ENCODE measurements at regions of chr16 and their contacts with region 1.

Region 1: DNA sequence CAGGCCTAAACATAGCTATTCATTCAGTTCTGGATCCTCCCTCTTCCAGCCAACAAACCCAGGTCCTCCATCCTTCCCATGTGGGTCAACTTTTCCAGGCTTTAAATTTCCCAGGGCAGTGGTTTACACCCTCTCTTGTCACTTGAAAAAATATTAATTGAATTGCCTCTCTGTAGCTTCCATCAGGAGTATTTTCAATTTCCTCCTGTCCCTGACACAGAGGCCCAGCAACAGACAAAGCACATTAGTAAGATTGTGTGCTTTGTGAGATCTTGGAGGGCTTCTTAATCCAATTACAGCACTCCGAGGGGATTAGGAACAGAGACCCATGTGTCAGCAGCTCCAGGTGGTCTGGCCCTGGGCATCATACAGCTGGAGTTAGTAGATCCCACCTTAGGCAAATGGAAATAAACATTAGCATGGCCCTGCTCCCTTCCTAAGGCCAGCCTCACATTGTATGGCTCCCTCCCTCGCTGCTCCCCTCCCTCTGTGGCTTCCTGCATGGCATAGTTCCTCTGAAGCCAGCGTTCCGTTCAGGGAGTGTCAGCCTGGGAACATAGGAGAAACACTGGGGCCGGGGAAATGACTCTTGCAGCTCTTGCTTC is 132.7 kb upstream of the HSBP1 start:
- DNase-seq: no peak
- H3K4me3 ChIP-seq: no peak overlapping the region
- H3K27ac ChIP-seq: no peak overlapping the region
- H3K4me1 ChIP-seq: no peaks in the 10 kb centered on the region
- H3K27me3 ChIP-seq: no peaks in the 10 kb centered on the region
- CTCF ChIP-seq: no peak
- EP300 ChIP-seq: no peak
- POLR2A ChIP-seq: no peak

Region 2: DNA sequence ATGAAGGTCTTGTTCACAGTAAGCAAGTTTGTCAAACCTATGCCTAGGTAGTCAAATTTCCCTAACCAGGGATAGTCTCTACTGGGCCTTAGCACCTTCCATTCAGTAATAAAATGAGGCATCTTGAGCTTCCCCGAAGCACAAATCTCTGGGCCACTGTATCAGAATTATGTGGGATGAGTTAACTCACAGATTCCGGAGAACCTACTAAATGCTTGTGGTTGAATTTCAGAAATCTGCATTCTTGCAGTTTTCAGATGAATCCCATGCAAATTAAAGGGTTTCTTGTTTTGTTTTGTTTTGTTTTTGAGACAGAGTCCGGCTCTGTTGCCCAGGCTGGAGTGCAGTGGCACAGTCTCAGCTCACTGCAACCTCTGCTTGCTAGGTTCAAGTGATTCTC is 346.1 kb before region 1 on chr16:
- intact Hi-C with region 1: no loop called
- DNase-seq: no peak
- H3K4me3 ChIP-seq: no peak overlapping the region
- H3K27ac ChIP-seq: no peak overlapping the region
- H3K4me1 ChIP-seq: no peaks in the 10 kb centered on the region
- H3K27me3 ChIP-seq: no peaks in the 10 kb centered on the region
- CTCF ChIP-seq: no peak
- EP300 ChIP-seq: no peak
- POLR2A ChIP-seq: no peak

Region 3: DNA sequence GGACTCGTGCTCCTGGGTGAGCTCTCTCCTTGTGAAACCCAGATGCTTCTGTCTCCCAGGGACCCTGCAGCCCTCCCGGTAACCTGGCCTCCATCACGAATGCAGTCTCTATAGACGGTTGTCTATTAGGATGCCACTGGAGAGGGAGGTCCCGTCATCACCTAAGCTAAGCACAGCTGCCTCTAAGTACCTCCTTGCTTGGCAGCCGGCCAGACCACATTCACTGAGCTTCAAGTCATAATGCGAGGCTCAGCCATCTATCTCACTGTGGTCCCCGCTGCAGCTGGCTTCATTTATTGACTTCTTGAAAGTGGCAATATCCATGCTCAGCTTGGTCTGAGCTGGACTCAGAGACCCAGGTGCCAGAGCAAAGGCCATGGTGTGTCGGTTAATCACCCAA is 58.3 kb after region 1 on chr16:
- intact Hi-C with region 1: loop called in 1 of 4 experiments (anchors 2 kb)
- DNase-seq: no peak
- H3K4me3 ChIP-seq: no peak overlapping the region
- H3K27ac ChIP-seq: no peak overlapping the region
- H3K4me1 ChIP-seq: no peaks in the 10 kb centered on the region
- H3K27me3 ChIP-seq: no peaks in the 10 kb centered on the region
- CTCF ChIP-seq: no peak
- EP300 ChIP-seq: no peak
- POLR2A ChIP-seq: no peak

Region 4: DNA sequence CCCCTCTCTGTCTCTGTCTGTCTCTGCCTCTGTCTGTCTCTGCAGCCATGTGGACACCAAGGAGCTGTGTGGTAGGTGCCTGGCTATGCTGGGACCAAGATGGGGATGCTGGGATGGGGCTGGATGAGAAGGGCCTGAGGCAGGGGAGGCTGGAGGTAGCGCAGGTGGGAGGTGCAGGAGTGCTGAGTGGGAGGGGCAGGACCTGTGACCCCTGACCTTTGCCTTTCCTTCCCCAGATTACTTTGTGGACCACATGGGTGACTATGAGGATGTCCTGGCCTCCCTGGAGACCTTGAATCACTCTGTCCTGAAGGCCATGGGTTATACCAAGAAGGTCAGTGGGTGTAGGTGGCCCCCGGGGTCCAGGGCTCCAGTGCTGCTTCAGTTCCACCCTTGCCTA is 305.8 kb after region 1 on chr16:
- intact Hi-C with region 1: no loop called
- DNase-seq: no peak
- H3K4me3 ChIP-seq: no peak overlapping the region
- H3K27ac ChIP-seq: no peak overlapping the region
- H3K4me1 ChIP-seq: no peaks in the 10 kb centered on the region
- H3K27me3 ChIP-seq: no peaks in the 10 kb centered on the region
- CTCF ChIP-seq: no peak
- EP300 ChIP-seq: no peak
- POLR2A ChIP-seq: no peak

Measured in ovary (tissue), 10 donors.